Activated T-helper 2 cell treated with anti-CD3 and anti-CD28 coated beads, Interferon-gamma antibody, Interleukin-2, Interleukin-4, amounts not matched to agents 10 μg/mL and 5 μg/mL and 100 μg/mL, durations not matched to agents 14 hours and 24 hours and 36 hours (primary cell): ENCODE measurements at regions of chr16 and their contacts with region 1.

Region 1: DNA sequence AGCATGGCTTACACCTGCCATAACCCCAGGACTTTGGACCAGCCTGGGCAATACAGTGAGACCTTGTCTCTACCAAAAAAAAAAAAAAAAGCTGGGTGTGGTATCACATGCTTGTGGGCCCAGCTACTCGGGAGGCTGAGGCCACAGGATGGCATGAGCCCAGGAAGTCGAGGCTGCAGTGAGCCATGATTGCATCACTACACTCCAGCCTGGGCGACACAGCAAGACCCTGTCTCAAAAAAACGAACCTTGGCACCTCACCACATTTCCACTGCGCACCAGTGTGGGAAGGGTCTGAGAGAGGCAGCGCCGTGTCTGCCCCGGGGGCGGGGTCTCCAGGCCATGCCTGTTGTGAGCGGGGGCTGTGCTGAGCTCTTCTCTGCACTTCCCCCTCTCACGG is 6.3 kb downstream of the ACSF3 start:
- DNase-seq: no peak
- H3K4me3 Mint-ChIP-seq: no peak overlapping the region
- H3K27ac Mint-ChIP-seq: no peak overlapping the region
- H3K4me1 Mint-ChIP-seq: peaks cover 56% of the 10 kb centered on the region
- H3K27me3 Mint-ChIP-seq: no peaks in the 10 kb centered on the region

Region 2: GRCh38 chr16:89031715-89032659 is 67.9 kb before region 1 on chr16:
- intact Hi-C with region 1: loop called (anchors 5 kb)
- DNase-seq: peak; percentile 59
- H3K4me3 Mint-ChIP-seq: peak overlapping the region; percentile 66
- H3K27ac Mint-ChIP-seq: peak overlapping the region; percentile 81
- H3K4me1 Mint-ChIP-seq: peaks cover 22% of the 10 kb centered on the region
- H3K27me3 Mint-ChIP-seq: peaks cover 2% of the 10 kb centered on the region

Region 3: GRCh38 chr16:89115216-89115861 is 15.4 kb after region 1 on chr16:
- intact Hi-C with region 1: loop called (anchors 1 kb)
- DNase-seq: peak; percentile 87
- H3K4me3 Mint-ChIP-seq: peak overlapping the region; percentile 79
- H3K27ac Mint-ChIP-seq: peak overlapping the region; percentile 91
- H3K4me1 Mint-ChIP-seq: peaks cover 31% of the 10 kb centered on the region
- H3K27me3 Mint-ChIP-seq: no peaks in the 10 kb centered on the region